Activated CD4-positive, alpha-beta T cell treated with anti-CD3 and anti-CD28 coated beads for 36 hours (primary cell): ENCODE measurements at regions of chr17 and their contacts with region 1.

Region 1: GRCh38 chr17:62703775-62704378 is 76.4 kb downstream of the MRC2 start:
- DNase-seq: peak; percentile 81
- ATAC-seq: peak; percentile 92
- H3K4me3 Mint-ChIP-seq: peak overlapping the region; percentile 32
- H3K27ac Mint-ChIP-seq: no peak overlapping the region
- H3K4me1 Mint-ChIP-seq: peaks cover 6% of the 10 kb centered on the region
- H3K27me3 Mint-ChIP-seq: peaks cover 34% of the 10 kb centered on the region

Region 2: GRCh38 chr17:63065820-63066813 is 362.2 kb after region 1 on chr17:
- CTCF ChIA-PET with region 1: no interaction called
- POLR2A ChIA-PET with region 1: no interaction called
- intact Hi-C with region 1: loop called in 1 of 2 experiments (anchors 10 kb)
- DNase-seq: no peak
- ATAC-seq: no peak
- H3K4me3 Mint-ChIP-seq: no peak overlapping the region
- H3K27ac Mint-ChIP-seq: no peak overlapping the region
- H3K4me1 Mint-ChIP-seq: peaks cover 9% of the 10 kb centered on the region
- H3K27me3 Mint-ChIP-seq: no peaks in the 10 kb centered on the region